Endothelial cell of umbilical vein (primary cell): ENCODE measurements at regions of chr6 and their contacts with region 1.

Region 1: GRCh38 chr6:157143171-157143889 is 180.0 kb downstream of the TMEM242 start:
- DNase-seq: peak; percentile 91
- H3K4me3 ChIP-seq: no peak overlapping the region
- H3K27ac ChIP-seq: peak overlapping the region; percentile 63
- H3K4me1 ChIP-seq: peaks cover 33% of the 10 kb centered on the region
- H3K27me3 ChIP-seq: no peaks in the 10 kb centered on the region
- CTCF ChIP-seq: no peak
- POLR2A ChIP-seq: no peak

Region 2: DNA sequence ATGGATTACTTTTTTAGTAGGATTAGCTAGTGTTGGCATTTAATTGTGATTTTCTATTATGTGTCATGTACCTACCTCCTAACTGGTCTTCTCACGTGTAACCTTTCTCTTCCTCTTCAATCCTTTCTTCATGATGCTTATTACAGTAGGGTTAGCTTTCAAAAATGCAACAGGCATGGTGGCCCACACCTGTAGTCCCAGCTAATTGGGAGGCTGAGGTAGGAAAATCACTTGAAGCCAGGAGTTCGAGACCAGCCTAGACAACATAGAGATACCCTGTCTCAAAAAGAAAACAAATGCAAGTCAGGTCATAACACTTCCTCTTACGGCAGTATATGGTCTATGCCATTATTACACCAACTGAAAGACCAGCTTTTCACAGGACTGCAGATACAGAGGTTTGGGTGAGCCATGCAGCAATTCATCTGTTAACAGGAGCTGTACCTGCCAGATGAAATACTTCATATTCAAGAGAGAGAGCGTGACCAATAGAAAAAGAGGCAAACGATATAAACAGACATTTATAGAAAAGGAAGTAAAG is 15.0 kb before region 1 on chr6:
- CTCF ChIA-PET with region 1: interaction called, 14 read pairs
- POLR2A ChIA-PET with region 1: interaction called, 3 read pairs
- dilution Hi-C with region 1: no loop called
- intact Hi-C with region 1: loop called (anchors 1 kb)
- DNase-seq: peak; percentile 17
- H3K4me3 ChIP-seq: no peak overlapping the region
- H3K27ac ChIP-seq: peak overlapping the region; percentile 80
- H3K4me1 ChIP-seq: peaks cover 17% of the 10 kb centered on the region
- H3K27me3 ChIP-seq: no peaks in the 10 kb centered on the region
- CTCF ChIP-seq: no peak
- POLR2A ChIP-seq: no peak